Left ventricle myocardium inferior (tissue), 1 donor: ENCODE measurements at regions of chr3 and their contacts with region 1.

Region 1: DNA sequence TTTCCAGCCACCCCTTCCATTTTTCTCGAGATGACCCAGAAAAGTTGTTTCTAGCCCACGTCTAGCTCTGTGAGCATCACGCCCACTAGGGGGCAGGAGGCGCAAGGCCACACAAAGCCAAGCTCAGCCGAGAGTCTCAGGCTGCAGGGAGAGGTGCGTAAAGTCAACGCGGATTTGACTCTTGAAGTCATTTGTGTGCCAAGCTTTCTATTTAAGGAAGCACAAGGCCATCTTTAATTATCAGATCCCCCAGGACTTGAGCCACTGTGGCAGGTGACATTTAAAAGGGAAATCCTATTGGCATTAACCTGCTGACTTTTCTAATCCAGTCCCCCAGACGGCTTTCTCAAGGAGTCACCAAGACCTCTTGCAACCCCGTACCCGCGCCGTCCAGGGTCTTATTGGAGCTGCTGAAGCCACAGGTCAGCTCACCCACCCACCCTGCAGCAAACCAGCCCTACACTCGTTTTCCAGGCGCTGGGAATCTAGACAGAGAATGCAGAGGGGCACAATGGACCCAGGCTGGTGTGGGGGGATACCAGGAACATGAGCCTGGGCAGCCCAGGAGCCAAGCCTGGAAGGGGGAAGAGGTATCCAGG is 62.1 kb downstream of the CAPN7 start:
- DNase-seq: peak; percentile 84
- H3K4me3 ChIP-seq: no peak overlapping the region
- H3K27ac ChIP-seq: peak overlapping the region; percentile 47
- H3K4me1 ChIP-seq: peaks cover 43% of the 10 kb centered on the region
- H3K27me3 ChIP-seq: no peaks in the 10 kb centered on the region
- CTCF ChIP-seq: peak; percentile 95

Region 2: GRCh38 chr3:15332405-15333098 is 64.4 kb after region 1 on chr3 and contains the start of gene SH3BP5:
- intact Hi-C with region 1: loop called (anchors 2 kb)
- DNase-seq: peak; percentile 78
- H3K4me3 ChIP-seq: peak within 1 kb of the TSS; percentile 89
- H3K27ac ChIP-seq: peak within 1 kb of the TSS; percentile 85
- H3K4me1 ChIP-seq: peaks cover 51% of the 10 kb centered on the region
- H3K27me3 ChIP-seq: no peaks in the 10 kb centered on the region
- CTCF ChIP-seq: peak; percentile 91
- total RNA-seq, gene SH3BP5: 8.8 TPM

Region 3: GRCh38 chr3:15377961-15378791 is 110.0 kb after region 1 on chr3:
- intact Hi-C with region 1: loop called (anchors 5 kb)
- DNase-seq: peak; percentile 91
- H3K4me3 ChIP-seq: peak overlapping the region; percentile 38
- H3K27ac ChIP-seq: peak overlapping the region; percentile 56
- H3K4me1 ChIP-seq: peaks cover 6% of the 10 kb centered on the region
- H3K27me3 ChIP-seq: no peaks in the 10 kb centered on the region
- CTCF ChIP-seq: peak; percentile 89

Region 4: DNA sequence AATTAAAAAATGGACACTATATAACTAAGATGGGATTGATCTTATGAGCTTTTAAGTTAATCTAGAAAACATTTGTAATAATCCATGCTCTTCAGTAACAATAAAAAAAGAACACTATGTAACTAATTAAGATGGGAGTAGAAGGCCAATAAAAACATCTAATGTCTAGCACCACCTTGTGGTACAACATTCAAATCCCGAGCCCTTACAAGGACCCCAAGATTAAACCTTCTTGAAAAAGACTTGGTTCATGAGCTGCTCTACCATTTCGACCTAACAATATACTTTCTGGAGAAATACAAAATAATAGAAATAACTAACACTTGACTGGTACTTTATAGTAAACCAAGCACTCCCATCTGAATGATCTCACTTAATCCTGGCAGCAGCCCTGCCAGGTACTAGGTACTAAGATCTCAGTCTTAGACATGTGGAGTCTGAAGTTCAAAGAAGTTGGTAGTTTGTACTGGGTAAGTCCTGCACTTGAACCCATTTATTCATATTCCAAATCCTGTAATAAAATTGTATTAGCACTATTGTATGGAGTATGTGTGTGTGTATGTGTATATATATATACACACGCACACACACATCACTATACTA is 137.4 kb after region 1 on chr3:
- intact Hi-C with region 1: no loop called
- DNase-seq: no peak
- H3K4me3 ChIP-seq: no peak overlapping the region
- H3K27ac ChIP-seq: no peak overlapping the region
- H3K4me1 ChIP-seq: no peaks in the 10 kb centered on the region
- H3K27me3 ChIP-seq: no peaks in the 10 kb centered on the region
- CTCF ChIP-seq: peak; percentile 74